Aorta (tissue), 5 donors: ENCODE measurements at regions of chr6 and their contacts with region 1.

Region 1: DNA sequence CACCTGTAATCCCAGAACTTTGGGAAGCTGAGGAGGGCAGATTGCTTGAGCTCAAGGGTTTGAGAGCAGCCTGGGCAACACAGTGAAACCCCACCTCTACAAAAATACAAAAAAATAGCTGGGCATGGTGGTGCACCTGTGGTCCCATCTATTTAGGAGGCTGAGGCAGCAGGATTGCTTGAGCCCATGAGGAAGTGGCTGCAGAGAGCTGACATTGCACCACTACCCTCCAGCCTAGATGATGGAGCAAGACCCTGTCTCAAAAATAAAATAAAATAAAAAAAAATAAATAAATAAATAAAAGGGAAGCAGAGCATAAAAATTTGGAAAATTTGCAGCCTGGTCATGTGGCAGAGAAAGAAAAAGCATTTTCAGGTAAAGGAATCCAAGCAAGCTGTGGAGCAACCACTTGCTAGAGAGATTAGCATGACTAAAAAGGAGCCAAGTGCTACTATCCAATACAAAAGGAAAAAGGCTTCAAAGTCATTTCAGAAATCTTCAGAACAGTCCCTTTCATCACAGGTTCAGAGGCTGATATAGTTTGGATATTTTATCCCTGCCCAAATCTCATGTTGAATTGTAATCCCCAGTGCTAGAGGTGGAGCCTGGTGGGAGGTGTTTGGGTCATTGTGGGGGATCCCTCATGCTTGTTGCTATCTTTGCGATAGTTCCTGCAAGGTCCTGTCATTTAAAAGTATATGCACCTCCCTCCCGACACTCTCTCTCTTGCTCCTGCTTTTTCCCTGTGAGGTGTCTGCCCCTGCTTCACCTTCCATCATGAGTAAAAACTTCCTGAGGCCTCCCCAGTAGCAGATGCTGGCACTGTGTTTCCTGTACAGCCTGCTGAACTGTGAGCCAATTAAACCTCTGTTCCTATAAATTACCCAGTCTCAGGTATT is 11.2 kb upstream of the TTK start:
- DNase-seq: no peak
- ATAC-seq: no peak
- H3K4me3 ChIP-seq: no peak overlapping the region
- H3K27ac ChIP-seq: no peak overlapping the region
- H3K4me1 ChIP-seq: no peaks in the 10 kb centered on the region
- H3K27me3 ChIP-seq: no peaks in the 10 kb centered on the region

Region 2: DNA sequence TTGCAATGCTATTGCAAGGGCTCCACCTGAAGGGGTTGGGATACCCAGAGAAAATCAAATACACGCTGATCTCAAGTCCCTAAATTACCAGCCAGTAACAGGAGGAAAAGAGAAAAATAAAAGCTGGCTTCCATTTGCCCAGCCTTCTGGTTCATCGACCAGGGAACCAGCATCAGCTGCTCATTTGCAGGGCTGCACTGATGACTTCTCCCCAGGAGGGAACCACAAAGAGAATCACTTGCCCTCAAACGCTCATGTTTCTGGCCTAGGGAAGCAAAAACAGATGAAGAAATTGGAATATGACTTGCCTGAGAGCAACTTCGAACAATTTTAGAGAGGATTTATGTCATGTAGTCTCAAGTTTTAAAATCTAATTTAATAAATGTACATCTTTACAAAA is 242.5 kb before region 1 on chr6:
- intact Hi-C with region 1: no loop called
- DNase-seq: no peak
- ATAC-seq: no peak
- H3K4me3 ChIP-seq: no peak overlapping the region
- H3K27ac ChIP-seq: no peak overlapping the region
- H3K4me1 ChIP-seq: no peaks in the 10 kb centered on the region
- H3K27me3 ChIP-seq: no peaks in the 10 kb centered on the region

Region 3: GRCh38 chr6:79941489-79942151 is 51.6 kb before region 1 on chr6:
- intact Hi-C with region 1: no loop called
- DNase-seq: no peak
- ATAC-seq: no peak
- H3K4me3 ChIP-seq: no peak overlapping the region
- H3K27ac ChIP-seq: no peak overlapping the region
- H3K4me1 ChIP-seq: no peaks in the 10 kb centered on the region
- H3K27me3 ChIP-seq: no peaks in the 10 kb centered on the region

Region 4: DNA sequence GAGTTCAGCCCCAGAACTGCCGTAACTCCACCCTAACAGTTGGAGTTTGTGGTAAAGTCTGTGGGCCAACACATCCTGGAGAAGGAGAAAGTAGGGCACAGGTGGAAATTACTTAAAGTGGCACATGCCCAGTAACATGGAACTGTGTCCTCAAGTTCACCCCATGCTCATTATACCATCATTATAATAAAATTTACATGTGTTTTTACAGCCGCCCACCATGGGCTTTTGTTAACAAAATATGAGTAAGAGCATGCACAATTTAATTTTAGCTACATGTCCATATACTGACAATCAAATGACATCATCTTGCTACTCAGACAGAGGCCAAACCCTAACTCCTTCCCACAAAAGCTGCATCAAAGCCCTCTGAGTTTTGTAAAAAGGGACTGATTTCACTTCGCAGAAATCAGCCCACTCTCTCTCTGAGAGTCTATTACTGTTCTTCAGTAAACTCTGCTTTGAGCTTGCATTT is 28.6 kb before region 1 on chr6:
- intact Hi-C with region 1: no loop called
- DNase-seq: no peak
- ATAC-seq: no peak
- H3K4me3 ChIP-seq: no peak overlapping the region
- H3K27ac ChIP-seq: no peak overlapping the region
- H3K4me1 ChIP-seq: no peaks in the 10 kb centered on the region
- H3K27me3 ChIP-seq: no peaks in the 10 kb centered on the region

Region 5: GRCh38 chr6:80145509-80145908 is 152.2 kb after region 1 on chr6:
- intact Hi-C with region 1: loop called in 1 of 2 experiments (anchors 5 kb)
- DNase-seq: no peak
- ATAC-seq: peak; percentile 17
- H3K4me3 ChIP-seq: no peak overlapping the region
- H3K27ac ChIP-seq: no peak overlapping the region
- H3K4me1 ChIP-seq: peaks cover 3 to 15% of the 10 kb centered on the region in 2 donors
- H3K27me3 ChIP-seq: no peaks in the 10 kb centered on the region